Testis (tissue), 5 donors: ENCODE measurements at regions of chr14 and their contacts with region 1.

Region 1: DNA sequence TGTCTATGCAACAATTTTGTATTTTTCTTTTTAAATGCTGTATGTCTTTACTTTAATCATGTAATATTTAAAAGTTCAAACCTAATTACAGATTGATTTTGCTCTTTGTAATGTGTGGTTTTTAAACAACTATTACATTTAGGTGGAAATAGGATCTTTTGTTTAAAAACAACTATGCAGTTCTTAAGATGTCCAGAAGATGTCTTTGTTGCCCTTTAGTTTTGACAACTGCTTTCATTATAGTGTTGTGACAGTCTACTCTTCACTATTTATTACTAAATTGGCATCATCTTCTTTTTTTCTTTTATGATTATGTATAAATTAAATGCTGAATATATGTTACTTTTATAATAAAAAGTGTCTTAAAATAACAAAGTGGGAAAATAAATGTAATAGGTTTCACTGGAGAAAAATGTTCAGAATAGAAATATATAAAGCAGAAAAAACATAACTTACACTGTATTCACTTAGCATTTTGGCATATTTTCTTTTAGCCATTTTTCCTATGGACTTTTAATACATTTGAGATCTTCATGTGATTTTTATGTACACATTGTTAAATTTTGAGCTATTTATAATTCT is 27.1 kb upstream of the PCNX4 start:
- DNase-seq: no peak
- H3K4me3 ChIP-seq: no peak overlapping the region
- H3K27ac ChIP-seq: no peak overlapping the region
- H3K4me1 ChIP-seq: no peaks in the 10 kb centered on the region
- H3K27me3 ChIP-seq: no peaks in the 10 kb centered on the region
- CTCF ChIP-seq: peak in 2 of 3 experiments; percentile 10 to 52
- POLR2A ChIP-seq: no peak

Region 2: DNA sequence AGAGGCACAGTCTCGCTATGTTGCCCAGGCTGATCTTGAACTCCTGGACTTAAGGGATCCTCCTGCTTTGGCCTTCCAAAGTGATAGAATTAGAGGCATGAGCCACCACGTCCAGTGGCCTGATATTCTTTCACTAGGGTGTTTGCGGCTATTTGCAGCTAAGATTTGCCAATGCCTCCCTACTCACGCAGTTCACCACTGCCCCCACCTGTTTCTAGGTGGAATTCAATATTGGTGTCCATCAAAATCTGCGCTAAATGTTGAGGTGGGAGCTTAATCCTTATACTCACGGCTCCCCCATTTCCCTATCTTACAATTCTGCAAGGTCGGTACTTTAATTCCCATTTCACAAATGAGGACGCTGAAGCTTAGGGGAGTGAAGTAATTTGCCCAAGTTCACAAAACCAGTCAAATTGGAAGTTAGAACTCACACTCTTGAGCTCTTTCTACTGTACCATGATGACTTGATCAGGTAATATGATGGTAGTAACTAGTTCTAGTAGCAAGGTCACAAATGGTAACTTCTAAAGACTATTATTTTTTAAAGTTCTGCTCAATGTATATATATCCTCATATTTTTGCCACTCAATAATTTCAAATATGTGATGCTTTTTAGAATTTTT is 166.7 kb before region 1 on chr14:
- intact Hi-C with region 1: no loop called
- DNase-seq: peak; percentile 61
- H3K4me3 ChIP-seq: no peak overlapping the region
- H3K27ac ChIP-seq: no peak overlapping the region
- H3K4me1 ChIP-seq: no peaks in the 10 kb centered on the region
- H3K27me3 ChIP-seq: no peaks in the 10 kb centered on the region
- CTCF ChIP-seq: peak in 2 of 3 experiments; percentile 43 to 57
- POLR2A ChIP-seq: no peak

Region 3: DNA sequence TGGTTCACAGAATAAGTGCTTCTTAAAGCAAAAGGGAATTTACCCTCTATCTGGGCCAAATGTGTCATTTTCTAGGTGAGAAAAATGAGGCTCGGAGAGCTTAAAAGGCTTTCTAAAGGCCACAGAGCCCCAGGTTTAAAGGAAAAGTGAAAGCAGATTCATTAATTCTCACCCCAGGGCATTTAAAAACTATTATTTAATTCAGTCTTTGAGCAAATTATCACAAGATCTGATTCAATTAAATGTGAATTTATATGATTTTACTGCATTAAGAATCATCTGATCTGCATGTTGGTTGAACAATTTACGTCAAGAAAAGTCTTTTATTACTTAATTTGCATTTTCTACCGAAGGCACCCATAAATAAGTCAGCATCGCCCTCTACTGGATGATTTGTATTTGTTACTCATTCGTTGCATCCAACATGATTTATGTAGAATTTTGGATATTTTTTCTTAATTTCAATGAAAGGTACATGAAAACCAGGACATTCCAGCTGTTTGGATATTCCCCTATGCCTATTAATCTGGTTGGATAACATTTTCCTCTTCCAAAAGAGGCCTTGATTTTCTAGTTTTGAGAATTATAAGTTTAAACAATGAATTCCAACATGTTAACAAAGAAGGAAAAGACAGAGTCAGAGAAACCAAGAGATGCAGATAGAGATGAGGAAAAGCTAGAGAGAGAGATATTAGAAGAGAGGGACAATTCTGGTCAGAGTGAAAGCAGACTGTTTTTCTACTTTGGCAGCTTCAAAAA is 119.7 kb after region 1 on chr14:
- intact Hi-C with region 1: loop called (anchors 10 kb)
- DNase-seq: no peak
- H3K4me3 ChIP-seq: no peak overlapping the region
- H3K27ac ChIP-seq: peak overlapping the region in 1 of 2 donors; percentile 53
- H3K4me1 ChIP-seq: no peaks in the 10 kb centered on the region
- H3K27me3 ChIP-seq: no peaks in the 10 kb centered on the region
- CTCF ChIP-seq: peak; percentile 46 to 74 (median 73)
- POLR2A ChIP-seq: no peak